Right ventricle myocardium superior (tissue), 1 donor: ENCODE measurements at regions of chr17 and their contacts with region 1.

Region 1: DNA sequence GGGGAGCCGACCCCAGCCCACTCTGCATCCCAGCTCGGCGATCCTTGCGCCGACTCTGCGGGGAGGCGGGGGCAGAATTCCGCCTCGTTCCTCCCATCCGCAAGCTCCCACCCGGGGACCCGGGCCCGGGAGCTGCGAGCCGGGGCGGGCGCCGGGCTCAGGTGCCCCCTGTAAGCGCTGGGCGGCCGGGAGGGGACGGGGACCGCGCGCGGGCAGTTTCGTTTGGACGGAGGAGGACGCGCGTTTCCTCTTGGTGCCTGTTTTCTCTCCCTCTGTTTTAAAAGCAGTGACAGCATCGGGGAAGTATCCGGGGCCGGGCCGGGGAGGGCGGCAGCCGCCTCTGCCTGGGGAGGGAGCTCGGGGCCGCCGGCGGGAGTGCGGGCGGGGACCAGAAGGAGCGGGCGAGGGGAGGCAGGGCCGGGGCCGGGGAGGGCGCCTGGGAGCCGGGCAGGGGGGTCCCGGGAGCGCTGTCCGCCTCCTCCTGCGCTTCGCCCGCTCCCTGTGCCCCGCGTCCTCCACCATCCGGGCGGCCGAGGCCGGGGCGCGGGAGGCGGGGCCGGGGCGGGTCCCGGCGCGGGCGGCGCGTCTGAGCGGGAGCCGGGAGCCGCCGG is 57.0 kb downstream of the RAP1GAP2 start:
- DNase-seq: peak; percentile 78
- ATAC-seq: peak; percentile 63

Region 2: GRCh38 chr17:2532146-2532720 is 321.0 kb before region 1 on chr17:
- intact Hi-C with region 1: no loop called
- DNase-seq: no peak
- ATAC-seq: no peak

Region 3: GRCh38 chr17:2904152-2904551 is 50.9 kb after region 1 on chr17:
- intact Hi-C with region 1: loop called (anchors 10 kb)
- DNase-seq: peak; percentile 82
- ATAC-seq: peak; percentile 80